ENCODE measurements at regions of chr2 and their contacts with region 1.

Region 1: DNA sequence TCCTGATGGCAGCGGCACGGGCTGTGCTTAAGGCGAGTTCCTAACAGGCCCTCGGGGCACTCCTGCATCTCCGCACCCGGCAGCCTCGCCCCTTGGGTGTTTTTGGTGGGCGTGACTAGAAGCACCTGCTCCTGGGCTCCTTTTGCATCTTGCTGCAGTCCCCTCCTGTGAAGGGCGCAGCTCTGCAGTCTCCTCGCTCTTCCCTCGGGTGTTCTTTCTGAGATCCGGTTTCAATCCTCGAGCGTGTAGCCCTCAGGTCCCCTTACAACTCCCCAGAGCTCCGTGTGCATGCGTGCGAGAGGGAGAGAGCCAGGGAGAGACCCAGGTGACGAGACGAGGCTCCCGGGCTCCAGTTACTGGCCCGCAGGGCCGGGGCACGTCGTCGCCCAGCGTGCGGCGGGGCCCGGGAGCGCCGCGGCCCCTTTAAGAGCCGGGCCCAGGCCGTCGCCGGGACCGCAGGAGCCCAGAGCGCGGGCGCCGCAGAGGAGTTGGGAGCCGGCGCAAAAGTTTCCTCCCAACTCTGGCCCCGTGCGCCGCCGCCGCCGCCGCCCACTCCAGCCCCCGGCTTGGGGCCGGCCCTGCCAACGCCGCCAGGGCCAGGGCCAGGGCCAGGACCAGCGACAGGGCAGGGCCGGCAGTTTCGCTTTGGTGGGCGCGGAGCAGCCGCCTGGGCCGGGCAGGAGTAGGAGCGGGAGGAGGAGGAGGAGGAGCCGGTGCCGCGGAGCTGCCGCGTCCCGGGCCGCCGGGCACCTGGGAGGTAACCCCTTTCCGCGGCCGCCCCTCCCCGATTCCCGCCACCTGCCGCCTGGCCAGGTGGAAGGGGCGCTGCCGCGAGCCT is at the start of gene PARD3B:
- DNase-seq: peak; percentile 57
- H3K4me3 ChIP-seq: peak within 1 kb of the TSS; percentile 52 to 69 (median 59)
- H3K27ac ChIP-seq: no peak within 1 kb of the TSS
- H3K4me1 ChIP-seq: peaks cover 14% of the 10 kb centered on the region
- H3K27me3 ChIP-seq: no peaks in the 10 kb centered on the region
- CTCF ChIP-seq: no peak
- total RNA-seq, gene PARD3B: 4.1 to 6.5 TPM

Region 2: GRCh38 chr2:204452464-204453023 is 92.7 kb before region 1 on chr2:
- CTCF ChIA-PET with region 1: no interaction called
- dilution Hi-C with region 1: no loop called
- in situ Hi-C with region 1: no loop called
- intact Hi-C with region 1: loop called (anchors 10 kb)
- DNase-seq: peak; percentile 92
- H3K4me3 ChIP-seq: no peak overlapping the region
- H3K27ac ChIP-seq: no peak overlapping the region
- H3K4me1 ChIP-seq: no peaks in the 10 kb centered on the region
- H3K27me3 ChIP-seq: no peaks in the 10 kb centered on the region
- CTCF ChIP-seq: no peak

Region 3: DNA sequence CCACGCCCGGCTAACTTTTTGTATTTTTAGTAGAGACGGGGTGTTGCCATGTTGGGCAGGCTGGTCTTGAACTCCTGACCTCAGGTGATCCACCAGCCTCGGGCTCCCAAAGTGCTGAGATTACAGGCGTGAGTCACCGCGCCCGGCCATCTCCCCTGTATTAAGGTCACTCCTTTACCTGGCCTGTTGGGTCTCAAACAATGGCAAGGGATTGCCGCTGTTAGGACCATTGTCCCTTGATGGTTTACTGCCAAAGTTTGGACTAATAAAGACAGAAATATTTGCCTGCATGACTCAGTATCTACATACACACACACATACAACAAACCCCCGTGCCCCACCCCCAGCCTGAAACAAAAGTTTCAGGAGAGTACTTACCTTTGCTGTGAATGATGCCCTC is 16.5 kb after region 1 on chr2:
- CTCF ChIA-PET with region 1: no interaction called
- dilution Hi-C with region 1: no loop called
- in situ Hi-C with region 1: no loop called
- intact Hi-C with region 1: no loop called
- DNase-seq: no peak
- H3K4me3 ChIP-seq: no peak overlapping the region
- H3K27ac ChIP-seq: no peak overlapping the region
- H3K4me1 ChIP-seq: no peaks in the 10 kb centered on the region
- H3K27me3 ChIP-seq: no peaks in the 10 kb centered on the region
- CTCF ChIP-seq: no peak

Region 4: GRCh38 chr2:204664708-204665121 is 119.5 kb after region 1 on chr2:
- CTCF ChIA-PET with region 1: no interaction called
- dilution Hi-C with region 1: no loop called
- in situ Hi-C with region 1: no loop called
- intact Hi-C with region 1: loop called (anchors 10 kb)
- DNase-seq: peak; percentile 11
- H3K4me3 ChIP-seq: no peak overlapping the region
- H3K27ac ChIP-seq: peak overlapping the region; percentile 76
- H3K4me1 ChIP-seq: peaks cover 19% of the 10 kb centered on the region
- H3K27me3 ChIP-seq: no peaks in the 10 kb centered on the region
- CTCF ChIP-seq: no peak

Measured in mammary epithelial cell (primary cell).